ENCODE measurements at regions of chr6 and their contacts with region 1.

Region 1: GRCh38 chr6:109187399-109188114 is 92.2 kb downstream of the CEP57L1 start:
- DNase-seq: peak; percentile 60 to 74 (median 67)
- H3K4me3 ChIP-seq: peak overlapping the region in 1 of 7 experiments; percentile 49
- H3K27ac ChIP-seq: peak overlapping the region in 1 of 2 experiments; percentile 27
- H3K4me1 ChIP-seq: peaks cover 13 to 58% (median 24%) of the 10 kb centered on the region in 4 experiments
- H3K27me3 ChIP-seq: no peaks in the 10 kb centered on the region

Region 2: DNA sequence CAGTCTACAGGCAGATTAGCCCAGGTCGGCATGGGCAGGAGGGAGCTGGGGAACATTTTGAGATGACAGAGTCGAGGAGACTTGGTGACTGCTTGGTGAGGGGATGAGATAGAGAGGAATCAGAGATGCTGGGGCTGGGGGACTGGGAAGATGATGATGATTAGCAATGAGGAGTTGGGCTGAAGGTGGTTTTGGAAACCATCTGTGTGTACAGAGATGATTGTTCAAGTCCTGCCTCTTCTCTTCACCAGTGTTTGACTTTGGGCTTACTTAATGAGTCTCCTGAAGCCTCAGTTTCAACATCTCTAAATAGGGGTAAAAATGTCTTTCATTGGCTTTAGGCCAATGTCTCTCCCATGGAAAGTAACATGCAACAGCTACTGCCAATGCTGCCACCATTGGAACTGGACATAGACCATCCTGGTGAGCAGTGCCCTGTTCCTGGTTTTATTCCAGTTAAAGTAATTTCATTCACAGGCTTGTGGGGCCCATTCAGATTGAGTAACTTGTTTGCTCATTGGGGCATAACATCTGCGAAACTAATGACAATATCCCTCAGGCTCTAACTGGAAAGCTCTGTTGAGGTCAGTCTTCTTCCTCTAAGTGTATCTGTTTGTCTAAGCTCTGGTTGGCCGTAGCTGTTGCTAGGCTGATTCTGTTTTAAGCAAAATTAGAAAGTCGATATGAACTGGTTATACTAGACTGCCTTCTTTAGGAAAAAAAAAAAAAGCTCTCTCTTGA is 240.3 kb before region 1 on chr6:
- CTCF ChIA-PET with region 1: no interaction called
- POLR2A ChIA-PET with region 1: no interaction called
- DNase-seq: peak in 2 of 3 donors; percentile 73 to 85
- H3K4me3 ChIP-seq: peak overlapping the region in 1 of 7 experiments; percentile 8
- H3K27ac ChIP-seq: no peak overlapping the region
- H3K4me1 ChIP-seq: peaks cover 9 to 57% (median 29%) of the 10 kb centered on the region in 4 experiments
- H3K27me3 ChIP-seq: no peaks in the 10 kb centered on the region

Region 3: GRCh38 chr6:109202409-109203284 is 15.1 kb after region 1 on chr6:
- CTCF ChIA-PET with region 1: interaction called, 20 read pairs
- POLR2A ChIA-PET with region 1: no interaction called
- DNase-seq: no peak
- H3K4me3 ChIP-seq: no peak overlapping the region
- H3K27ac ChIP-seq: no peak overlapping the region
- H3K4me1 ChIP-seq: no peaks in the 10 kb centered on the region
- H3K27me3 ChIP-seq: no peaks in the 10 kb centered on the region

Region 4: DNA sequence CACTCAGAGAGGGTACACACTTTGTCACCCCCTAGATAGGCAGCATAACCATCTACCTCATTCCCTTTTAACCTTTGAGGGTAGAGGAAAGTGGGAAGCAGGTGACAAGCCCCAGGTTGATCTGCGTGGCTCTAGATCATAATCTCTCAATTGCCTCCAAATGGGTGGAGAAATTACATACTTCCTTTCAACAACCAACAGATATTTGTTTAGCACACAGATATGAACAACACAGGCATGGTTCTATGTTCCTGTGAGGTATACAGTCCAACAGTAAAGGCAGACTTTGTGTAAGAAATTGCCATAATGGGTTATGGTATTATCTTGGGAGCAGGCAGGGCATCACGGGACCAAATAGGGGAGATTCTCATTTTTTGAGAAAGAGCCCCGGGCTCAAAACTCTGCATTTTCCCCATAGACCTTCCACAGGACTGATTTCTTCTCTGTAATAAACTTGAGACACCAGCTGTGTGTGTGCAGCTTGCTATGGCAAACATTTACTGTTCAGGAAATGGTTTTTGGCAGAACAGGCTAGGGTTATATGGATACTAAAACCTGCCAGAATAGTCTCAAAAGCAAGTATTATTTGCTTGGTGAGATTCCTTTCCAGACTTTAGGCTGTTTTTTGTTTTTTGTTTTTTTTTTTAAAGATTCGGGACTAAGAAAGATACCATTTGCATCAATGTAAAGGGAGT is 68.5 kb after region 1 on chr6:
- CTCF ChIA-PET with region 1: no interaction called
- POLR2A ChIA-PET with region 1: no interaction called
- DNase-seq: peak in 1 of 3 donors; percentile 21
- H3K4me3 ChIP-seq: no peak overlapping the region
- H3K27ac ChIP-seq: peak overlapping the region in 1 of 2 experiments; percentile 34
- H3K4me1 ChIP-seq: peaks cover 0 to 13% (median 9%) of the 10 kb centered on the region in 4 experiments
- H3K27me3 ChIP-seq: no peaks in the 10 kb centered on the region

Region 5: GRCh38 chr6:109362102-109362884 is 174.7 kb after region 1 on chr6:
- CTCF ChIA-PET with region 1: interaction called, 10 read pairs
- POLR2A ChIA-PET with region 1: no interaction called
- DNase-seq: no peak
- H3K4me3 ChIP-seq: no peak overlapping the region
- H3K27ac ChIP-seq: no peak overlapping the region
- H3K4me1 ChIP-seq: peaks cover 0 to 1% (median 0%) of the 10 kb centered on the region in 4 experiments
- H3K27me3 ChIP-seq: no peaks in the 10 kb centered on the region

Region 6: GRCh38 chr6:109382576-109383437 is 195.2 kb after region 1 on chr6:
- CTCF ChIA-PET with region 1: interaction called, 78 read pairs
- POLR2A ChIA-PET with region 1: interaction called, 19 read pairs
- DNase-seq: peak; percentile 97 to 98 (median 97)
- H3K4me3 ChIP-seq: peak overlapping the region; percentile 71 to 100 (median 96)
- H3K27ac ChIP-seq: peak overlapping the region; percentile 99 to 100
- H3K4me1 ChIP-seq: peaks cover 39 to 58% (median 42%) of the 10 kb centered on the region in 4 experiments
- H3K27me3 ChIP-seq: no peaks in the 10 kb centered on the region

Region 7: DNA sequence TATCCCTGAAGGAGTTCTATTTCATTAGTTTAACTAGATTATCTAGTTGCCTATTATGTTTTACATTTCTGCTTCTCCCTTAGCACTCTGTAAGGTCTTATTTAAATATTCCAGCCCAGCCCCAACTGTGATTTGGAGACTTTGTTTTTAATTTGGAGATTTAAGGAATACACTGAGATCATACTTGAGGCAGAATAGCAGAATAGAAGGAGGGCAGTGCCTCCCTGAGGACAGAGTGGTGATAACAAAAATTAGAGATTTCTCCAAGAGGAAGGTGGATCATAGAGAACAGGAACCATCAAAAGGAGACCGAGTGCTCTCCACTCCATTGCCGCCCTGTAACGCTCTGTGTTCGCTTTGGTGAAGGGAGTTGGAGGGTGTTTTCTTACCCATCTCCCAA is 209.5 kb after region 1 on chr6:
- CTCF ChIA-PET with region 1: interaction called, 17 read pairs
- POLR2A ChIA-PET with region 1: no interaction called
- DNase-seq: peak; percentile 63 to 75 (median 65)
- H3K4me3 ChIP-seq: peak overlapping the region in 1 of 7 experiments; percentile 53
- H3K27ac ChIP-seq: no peak overlapping the region
- H3K4me1 ChIP-seq: peaks cover 0 to 28% (median 15%) of the 10 kb centered on the region in 4 experiments
- H3K27me3 ChIP-seq: no peaks in the 10 kb centered on the region

Measured in common myeloid progenitor, CD34-positive (primary cell).